Endothelial cell of umbilical vein (primary cell): ENCODE measurements at regions of chr4 and their contacts with region 1.

Region 1: GRCh38 chr4:73662709-73663546 is 42.7 kb upstream of the RASSF6 start:
- DNase-seq: peak; percentile 76
- H3K4me3 ChIP-seq: no peak overlapping the region
- H3K27ac ChIP-seq: peak overlapping the region; percentile 94
- H3K4me1 ChIP-seq: peaks cover 28% of the 10 kb centered on the region
- H3K27me3 ChIP-seq: no peaks in the 10 kb centered on the region
- CTCF ChIP-seq: peak; percentile 25 to 44
- POLR2A ChIP-seq: no peak

Region 2: GRCh38 chr4:73445383-73446335 is 217.3 kb before region 1 on chr4:
- CTCF ChIA-PET with region 1: no interaction called
- POLR2A ChIA-PET with region 1: no interaction called
- dilution Hi-C with region 1: no loop called
- intact Hi-C with region 1: no loop called
- DNase-seq: no peak
- H3K4me3 ChIP-seq: no peak overlapping the region
- H3K27ac ChIP-seq: no peak overlapping the region
- H3K4me1 ChIP-seq: no peaks in the 10 kb centered on the region
- H3K27me3 ChIP-seq: peaks cover 14 to 42% of the 10 kb centered on the region in 2 experiments
- CTCF ChIP-seq: no peak
- POLR2A ChIP-seq: no peak

Region 3: DNA sequence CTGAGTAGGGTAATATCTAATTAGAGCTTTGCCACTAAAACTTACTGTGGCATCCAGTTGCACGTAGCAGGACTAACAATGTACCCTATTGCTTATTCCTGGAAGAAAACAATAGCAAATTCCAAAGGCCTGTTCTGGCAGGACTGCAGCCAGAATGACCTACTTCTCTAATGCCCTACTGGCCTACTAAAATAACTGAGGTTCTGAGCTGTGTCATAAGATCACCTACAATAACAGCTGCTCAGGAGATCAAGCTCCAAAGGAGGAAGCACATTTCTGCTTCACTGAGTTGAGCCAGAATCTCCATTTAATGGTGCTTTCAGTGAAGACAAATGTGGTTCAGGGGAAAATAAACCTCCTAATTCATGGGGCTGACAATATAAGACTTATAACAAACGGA is 35.3 kb after region 1 on chr4:
- CTCF ChIA-PET with region 1: interaction called, 14 read pairs
- POLR2A ChIA-PET with region 1: interaction called, 3 read pairs
- dilution Hi-C with region 1: no loop called
- intact Hi-C with region 1: no loop called
- DNase-seq: peak; percentile 95
- H3K4me3 ChIP-seq: no peak overlapping the region
- H3K27ac ChIP-seq: peak overlapping the region; percentile 38
- H3K4me1 ChIP-seq: peaks cover 19% of the 10 kb centered on the region
- H3K27me3 ChIP-seq: no peaks in the 10 kb centered on the region
- CTCF ChIP-seq: no peak
- POLR2A ChIP-seq: no peak

Region 4: GRCh38 chr4:73740353-73740778 is 77.4 kb after region 1 on chr4 and contains the start of gene CXCL8:
- CTCF ChIA-PET with region 1: interaction called, 16 read pairs
- POLR2A ChIA-PET with region 1: interaction called, 3 read pairs
- dilution Hi-C with region 1: no loop called
- intact Hi-C with region 1: loop called (anchors 1 kb)
- DNase-seq: peak; percentile 94
- H3K4me3 ChIP-seq: peak within 1 kb of the TSS in 2 of 3 experiments; percentile 20 to 62
- H3K27ac ChIP-seq: peak within 1 kb of the TSS; percentile 75
- H3K4me1 ChIP-seq: peaks cover 28% of the 10 kb centered on the region
- H3K27me3 ChIP-seq: no peaks in the 10 kb centered on the region
- CTCF ChIP-seq: no peak
- POLR2A ChIP-seq: peak; percentile 73
- total RNA-seq, gene CXCL8: 5.2 and 12.6 TPM in 2 replicates

Region 5: GRCh38 chr4:73864365-73864764 is 201.4 kb after region 1 on chr4:
- CTCF ChIA-PET with region 1: interaction called, 17 read pairs
- POLR2A ChIA-PET with region 1: no interaction called
- dilution Hi-C with region 1: no loop called
- intact Hi-C with region 1: loop called (anchors 1 kb)
- DNase-seq: peak; percentile 18
- H3K4me3 ChIP-seq: no peak overlapping the region
- H3K27ac ChIP-seq: no peak overlapping the region
- H3K4me1 ChIP-seq: peaks cover 8% of the 10 kb centered on the region
- H3K27me3 ChIP-seq: no peaks in the 10 kb centered on the region
- CTCF ChIP-seq: peak; percentile 10 to 31
- POLR2A ChIP-seq: no peak

Region 6: GRCh38 chr4:74038161-74039064 is 375.5 kb after region 1 on chr4 and contains the start of gene CXCL3:
- CTCF ChIA-PET with region 1: interaction called, 36 read pairs
- POLR2A ChIA-PET with region 1: no interaction called
- dilution Hi-C with region 1: no loop called
- intact Hi-C with region 1: loop called (anchors 1 kb)
- DNase-seq: peak; percentile 67
- H3K4me3 ChIP-seq: peak within 1 kb of the TSS; percentile 75 to 86 (median 82)
- H3K27ac ChIP-seq: peak within 1 kb of the TSS; percentile 88
- H3K4me1 ChIP-seq: peaks cover 11% of the 10 kb centered on the region
- H3K27me3 ChIP-seq: no peaks in the 10 kb centered on the region
- CTCF ChIP-seq: peak; percentile 23 to 44
- POLR2A ChIP-seq: peak; percentile 22
- total RNA-seq, gene CXCL3: 1.3 and 1.4 TPM in 2 replicates

Region 7: GRCh38 chr4:74157561-74158465 is 494.9 kb after region 1 on chr4 and contains the start of gene MTHFD2L:
- CTCF ChIA-PET with region 1: no interaction called
- POLR2A ChIA-PET with region 1: no interaction called
- dilution Hi-C with region 1: no loop called
- intact Hi-C with region 1: loop called (anchors 1 kb)
- DNase-seq: peak; percentile 96
- H3K4me3 ChIP-seq: peak within 1 kb of the TSS; percentile 73 to 97 (median 76)
- H3K27ac ChIP-seq: peak within 1 kb of the TSS; percentile 90
- H3K4me1 ChIP-seq: peaks cover 29% of the 10 kb centered on the region
- H3K27me3 ChIP-seq: no peaks in the 10 kb centered on the region
- CTCF ChIP-seq: no peak
- POLR2A ChIP-seq: peak; percentile 88
- total RNA-seq, gene MTHFD2L: 12.4 and 15.2 TPM in 2 replicates